HCT116 (cell line): ENCODE measurements at regions of chr6 and their contacts with region 1.

Region 1: GRCh38 chr6:134174672-134175198 is 122.3 kb upstream of the SLC2A12 start:
- DNase-seq: peak; percentile 73
- ATAC-seq: peak; percentile 77
- H3K4me3 ChIP-seq: peak overlapping the region; percentile 62 to 69
- H3K27ac ChIP-seq: peak overlapping the region; percentile 63
- H3K4me1 ChIP-seq: peaks cover 8 to 21% of the 10 kb centered on the region in 2 experiments
- H3K27me3 ChIP-seq: no peaks in the 10 kb centered on the region
- CTCF ChIP-seq: no peak
- POLR2A ChIP-seq: peak; percentile 95
- RAD21 ChIP-seq: peak; percentile 40

Region 2: DNA sequence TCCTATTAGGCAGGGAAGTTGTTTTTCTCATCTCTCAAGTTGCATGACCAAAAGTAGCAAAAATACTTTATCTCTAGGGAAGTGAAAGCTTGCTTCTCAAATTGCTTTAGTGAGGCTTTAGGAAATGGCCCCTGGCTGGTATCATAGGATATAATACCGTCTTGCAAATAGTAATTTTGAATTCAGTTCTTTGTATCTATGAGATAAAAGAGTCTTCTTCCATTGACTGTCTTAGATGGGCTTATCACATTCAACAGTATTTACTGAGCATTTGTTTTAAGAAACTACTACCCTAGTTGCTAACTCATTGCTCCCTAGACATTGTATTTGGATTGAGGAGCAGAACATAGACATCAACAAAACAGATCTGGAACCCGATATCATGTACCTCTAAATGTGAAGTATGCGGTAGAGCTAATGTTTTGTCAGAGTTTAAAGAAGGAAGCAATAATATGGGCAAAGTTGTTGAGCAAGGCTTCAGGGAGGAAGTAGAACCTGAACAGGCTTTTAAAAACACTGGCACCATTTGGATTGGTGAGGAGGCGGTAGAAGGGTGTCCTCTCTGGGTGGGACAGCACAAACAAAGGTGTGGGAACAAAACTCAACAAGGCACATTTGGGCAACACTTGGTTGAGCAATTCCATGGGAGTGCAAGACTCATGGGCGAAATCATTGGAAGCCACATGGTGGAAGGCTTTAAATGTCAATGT is 41.7 kb after region 1 on chr6:
- CTCF ChIA-PET with region 1: no interaction called
- POLR2A ChIA-PET with region 1: no interaction called
- RAD21 ChIA-PET with region 1: no interaction called
- intact Hi-C with region 1: no loop called
- DNase-seq: no peak
- ATAC-seq: no peak
- H3K4me3 ChIP-seq: no peak overlapping the region
- H3K27ac ChIP-seq: no peak overlapping the region
- H3K4me1 ChIP-seq: no peaks in the 10 kb centered on the region
- H3K27me3 ChIP-seq: no peaks in the 10 kb centered on the region
- CTCF ChIP-seq: no peak
- POLR2A ChIP-seq: no peak
- RAD21 ChIP-seq: no peak

Region 3: DNA sequence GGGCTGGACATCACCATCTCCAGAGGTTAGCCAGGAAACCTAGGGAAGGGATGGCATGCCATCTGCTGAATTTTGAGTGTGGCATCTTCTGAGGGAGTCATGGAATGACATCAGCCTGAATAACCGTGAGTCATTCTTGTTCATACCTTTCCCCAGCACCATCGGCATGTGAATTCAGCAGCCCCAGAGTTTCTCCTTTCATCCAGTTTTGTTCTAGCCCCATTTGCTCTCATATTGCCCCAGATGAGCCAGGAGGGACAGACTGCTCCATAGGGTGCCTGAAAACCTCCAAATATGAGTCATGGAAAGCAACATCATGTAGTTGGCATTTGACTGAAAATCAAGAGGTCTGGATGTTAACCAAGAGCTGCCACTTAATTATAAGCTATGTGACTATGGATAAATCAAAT is 362.4 kb after region 1 on chr6:
- CTCF ChIA-PET with region 1: no interaction called
- POLR2A ChIA-PET with region 1: no interaction called
- RAD21 ChIA-PET with region 1: no interaction called
- intact Hi-C with region 1: loop called (anchors 10 kb)
- DNase-seq: peak; percentile 92
- ATAC-seq: peak; percentile 97
- H3K4me3 ChIP-seq: 0 out of 4 replicates have a peak overlapping the region, but pooled peaks of 1 of the 2 experiments have one; percentile 16
- H3K27ac ChIP-seq: peak overlapping the region; percentile 33; the same call in 1 of the 2 replicates
- H3K4me1 ChIP-seq: peaks cover 6 to 30% of the 10 kb centered on the region in 2 experiments; a peak in 3 of 4 replicates
- H3K27me3 ChIP-seq: no peaks in the 10 kb centered on the region
- CTCF ChIP-seq: no peak
- POLR2A ChIP-seq: no peak
- RAD21 ChIP-seq: peak; percentile 50; the same call in 1 of the 2 replicates

Region 4: GRCh38 chr6:134640975-134641429 is 466.3 kb after region 1 on chr6:
- CTCF ChIA-PET with region 1: interaction called, 13 read pairs
- POLR2A ChIA-PET with region 1: interaction called, 3 read pairs
- RAD21 ChIA-PET with region 1: interaction called in 1 of 2 experiments, 3 read pairs
- intact Hi-C with region 1: loop called (anchors 1 kb)
- DNase-seq: peak; percentile 58
- ATAC-seq: peak; percentile 79
- H3K4me3 ChIP-seq: no peak overlapping the region
- H3K27ac ChIP-seq: no peak overlapping the region
- H3K4me1 ChIP-seq: peaks cover 10 to 25% of the 10 kb centered on the region in 2 experiments; a peak in 3 of 4 replicates
- H3K27me3 ChIP-seq: no peaks in the 10 kb centered on the region
- CTCF ChIP-seq: peak; percentile 65 to 93 (median 86)
- POLR2A ChIP-seq: no peak
- RAD21 ChIP-seq: peak; percentile 87

Region 5: GRCh38 chr6:134822920-134823709 is 648.4 kb after region 1 on chr6:
- CTCF ChIA-PET with region 1: interaction called, 29 read pairs
- POLR2A ChIA-PET with region 1: no interaction called
- RAD21 ChIA-PET with region 1: interaction called, 3 to 4 read pairs
- intact Hi-C with region 1: loop called (anchors 1 kb)
- DNase-seq: peak; percentile 86
- ATAC-seq: peak; percentile 99
- H3K4me3 ChIP-seq: no peak overlapping the region
- H3K27ac ChIP-seq: no peak overlapping the region
- H3K4me1 ChIP-seq: no peaks in the 10 kb centered on the region; a peak in 1 of 4 replicates
- H3K27me3 ChIP-seq: no peaks in the 10 kb centered on the region
- CTCF ChIP-seq: peak; percentile 83 to 97 (median 94)
- POLR2A ChIP-seq: no peak
- RAD21 ChIP-seq: peak; percentile 98

Region 6: DNA sequence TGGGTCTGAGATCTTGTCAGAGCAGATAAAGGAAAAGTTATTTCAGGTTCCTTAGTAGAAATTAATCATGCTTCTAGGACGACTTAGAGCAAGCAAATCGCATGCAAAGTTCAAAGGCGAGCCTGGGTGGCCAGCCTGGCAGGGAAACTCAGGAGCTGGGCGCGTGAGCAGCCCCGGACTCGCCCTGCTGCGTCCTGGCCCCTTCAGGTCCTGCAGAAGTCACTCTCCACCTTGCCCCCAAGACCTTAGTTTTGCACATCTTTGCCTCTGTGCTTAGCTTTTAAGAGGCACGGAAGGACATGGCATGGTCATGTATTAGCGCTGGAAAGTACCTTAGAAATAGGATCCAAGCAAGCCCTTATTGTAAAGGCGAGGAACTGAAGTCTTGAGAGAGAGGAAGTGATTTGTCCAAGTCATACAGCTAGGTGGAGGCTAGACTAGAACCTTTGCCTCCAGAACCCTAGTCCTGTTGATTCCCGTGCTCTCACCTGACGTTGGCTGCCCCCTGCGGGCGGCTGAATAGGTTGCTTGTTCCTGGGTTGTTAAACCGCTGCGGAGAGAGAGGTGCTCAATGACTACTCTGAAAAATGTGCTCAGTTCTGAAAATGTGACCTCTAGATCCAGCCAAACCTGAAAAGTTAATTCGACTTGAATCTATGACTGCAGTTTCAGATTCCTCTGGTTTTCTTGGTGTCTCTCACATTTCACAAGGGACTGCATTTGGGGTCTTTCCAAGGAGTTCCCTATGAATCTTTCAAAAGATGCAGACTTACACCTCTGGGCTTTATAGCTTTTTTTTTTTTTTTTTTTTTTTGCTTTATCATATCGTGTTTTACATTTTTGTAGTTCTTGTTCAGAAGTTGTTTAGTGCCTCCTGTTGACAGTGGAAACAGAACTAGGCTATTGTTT is 1009.1 kb after region 1 on chr6:
- CTCF ChIA-PET with region 1: no interaction called
- POLR2A ChIA-PET with region 1: no interaction called
- RAD21 ChIA-PET with region 1: no interaction called
- intact Hi-C with region 1: loop called (anchors 5 kb)
- DNase-seq: peak; percentile 83
- ATAC-seq: peak; percentile 71
- H3K4me3 ChIP-seq: peak overlapping the region; percentile 55 to 64
- H3K27ac ChIP-seq: no peak overlapping the region
- H3K4me1 ChIP-seq: peaks cover 2 to 39% of the 10 kb centered on the region in 2 experiments; a peak in 3 of 4 replicates
- H3K27me3 ChIP-seq: no peaks in the 10 kb centered on the region
- CTCF ChIP-seq: peak; percentile 72 to 84 (median 78)
- POLR2A ChIP-seq: no peak
- RAD21 ChIP-seq: peak; percentile 81